Activated CD4-positive, alpha-beta memory T cell treated with anti-CD3 and anti-CD28 coated beads for 36 hours (primary cell): ENCODE measurements at regions of chr14 and their contacts with region 1.

Region 1: GRCh38 chr14:30558675-30559555 is at the start of gene G2E3:
- DNase-seq: peak; percentile 93
- H3K4me3 Mint-ChIP-seq: peak within 1 kb of the TSS; percentile 100
- H3K27ac Mint-ChIP-seq: peak within 1 kb of the TSS; percentile 99
- H3K4me1 Mint-ChIP-seq: peaks cover 29% of the 10 kb centered on the region
- H3K27me3 Mint-ChIP-seq: peaks cover 3% of the 10 kb centered on the region
- total RNA-seq, gene G2E3: 25.3 to 31.2 TPM

Region 2: GRCh38 chr14:30355431-30355913 is 203.4 kb before region 1 on chr14:
- CTCF ChIA-PET with region 1: no interaction called
- POLR2A ChIA-PET with region 1: no interaction called
- intact Hi-C with region 1: no loop called
- DNase-seq: peak; percentile 37
- H3K4me3 Mint-ChIP-seq: no peak overlapping the region
- H3K27ac Mint-ChIP-seq: peak overlapping the region; percentile 16
- H3K4me1 Mint-ChIP-seq: peaks cover 19% of the 10 kb centered on the region
- H3K27me3 Mint-ChIP-seq: peaks cover 11% of the 10 kb centered on the region

Region 3: GRCh38 chr14:30621940-30622830 is 63.3 kb after region 1 on chr14 and contains the start of gene SCFD1:
- CTCF ChIA-PET with region 1: interaction called, 3 read pairs
- POLR2A ChIA-PET with region 1: no interaction called
- intact Hi-C with region 1: loop called (anchors 1 kb)
- DNase-seq: peak; percentile 96
- H3K4me3 Mint-ChIP-seq: peak within 1 kb of the TSS; percentile 83
- H3K27ac Mint-ChIP-seq: peak within 1 kb of the TSS; percentile 85
- H3K4me1 Mint-ChIP-seq: peaks cover 36% of the 10 kb centered on the region
- H3K27me3 Mint-ChIP-seq: no peaks in the 10 kb centered on the region
- total RNA-seq, gene SCFD1: 52.6 to 56.5 TPM

Region 4: DNA sequence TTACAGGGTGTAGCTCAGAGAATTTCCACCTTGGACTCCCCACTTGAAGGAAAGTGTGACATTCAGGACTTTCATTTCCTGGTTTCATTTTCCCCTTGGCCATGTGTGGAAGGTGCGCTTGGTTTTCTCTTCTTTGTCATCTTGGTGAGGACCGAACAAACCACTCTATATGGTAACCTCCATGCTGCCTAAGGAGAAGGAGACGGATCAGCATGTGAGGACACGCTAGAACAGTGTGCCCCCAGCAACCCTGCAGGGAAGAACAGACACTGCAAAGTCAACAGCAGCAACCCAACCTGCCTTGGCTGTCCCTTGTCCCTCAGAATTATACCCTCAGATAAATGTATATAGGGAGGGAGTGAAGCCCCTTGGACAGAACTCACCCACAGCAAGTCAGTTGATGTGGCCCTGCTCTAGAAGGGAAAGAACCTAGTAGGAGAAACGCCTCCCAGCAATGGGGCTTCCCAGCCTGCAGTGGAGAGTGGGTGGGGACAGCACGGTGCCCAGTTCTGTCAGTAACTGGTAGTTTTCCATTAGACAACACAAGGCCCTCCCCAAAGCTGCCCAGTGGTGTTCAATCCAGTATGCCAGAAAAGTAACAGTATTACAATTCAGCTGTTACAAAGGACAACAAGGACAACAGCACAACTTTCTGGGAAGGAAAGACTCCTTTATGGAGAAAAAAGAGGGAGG is 296.6 kb after region 1 on chr14:
- CTCF ChIA-PET with region 1: no interaction called
- POLR2A ChIA-PET with region 1: no interaction called
- intact Hi-C with region 1: loop called (anchors 5 kb)
- DNase-seq: peak; percentile 67
- H3K4me3 Mint-ChIP-seq: no peak overlapping the region
- H3K27ac Mint-ChIP-seq: no peak overlapping the region
- H3K4me1 Mint-ChIP-seq: peaks cover 15% of the 10 kb centered on the region
- H3K27me3 Mint-ChIP-seq: peaks cover 12% of the 10 kb centered on the region

Region 5: DNA sequence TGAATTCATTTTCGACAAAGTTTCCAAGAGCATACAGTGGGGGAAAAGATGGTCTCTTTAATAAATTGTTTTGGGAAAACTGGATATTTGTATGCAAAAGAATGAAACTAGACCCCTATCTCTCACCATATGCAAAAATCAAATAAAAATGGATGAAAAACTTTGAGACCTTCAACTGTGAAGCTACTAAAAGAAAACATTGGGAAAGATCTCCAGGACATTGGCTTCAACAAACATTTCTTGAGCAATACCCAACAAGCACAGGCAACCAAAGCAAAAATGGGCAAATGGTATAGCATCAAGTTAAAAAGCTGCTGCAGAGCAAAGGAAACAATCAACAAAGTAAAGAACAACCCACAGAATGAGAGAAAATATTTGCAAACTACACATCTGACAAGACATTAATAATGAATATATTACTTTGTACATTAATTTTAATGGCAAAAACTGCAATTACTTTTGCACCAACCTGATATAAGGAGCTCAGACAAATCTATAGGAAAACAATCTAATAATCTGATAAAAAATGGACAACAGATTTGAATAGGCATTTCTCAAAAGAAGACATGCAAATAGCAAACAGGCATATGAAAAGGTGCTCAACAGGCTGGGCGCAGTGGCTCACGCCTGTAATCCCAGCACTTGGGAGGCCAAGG is 1053.0 kb after region 1 on chr14:
- CTCF ChIA-PET with region 1: no interaction called
- POLR2A ChIA-PET with region 1: no interaction called
- intact Hi-C with region 1: no loop called
- DNase-seq: no peak
- H3K4me3 Mint-ChIP-seq: no peak overlapping the region
- H3K27ac Mint-ChIP-seq: no peak overlapping the region
- H3K4me1 Mint-ChIP-seq: no peaks in the 10 kb centered on the region
- H3K27me3 Mint-ChIP-seq: no peaks in the 10 kb centered on the region